HepG2 (cell line): ENCODE measurements at regions of chr9 and their contacts with region 1.

Region 1: DNA sequence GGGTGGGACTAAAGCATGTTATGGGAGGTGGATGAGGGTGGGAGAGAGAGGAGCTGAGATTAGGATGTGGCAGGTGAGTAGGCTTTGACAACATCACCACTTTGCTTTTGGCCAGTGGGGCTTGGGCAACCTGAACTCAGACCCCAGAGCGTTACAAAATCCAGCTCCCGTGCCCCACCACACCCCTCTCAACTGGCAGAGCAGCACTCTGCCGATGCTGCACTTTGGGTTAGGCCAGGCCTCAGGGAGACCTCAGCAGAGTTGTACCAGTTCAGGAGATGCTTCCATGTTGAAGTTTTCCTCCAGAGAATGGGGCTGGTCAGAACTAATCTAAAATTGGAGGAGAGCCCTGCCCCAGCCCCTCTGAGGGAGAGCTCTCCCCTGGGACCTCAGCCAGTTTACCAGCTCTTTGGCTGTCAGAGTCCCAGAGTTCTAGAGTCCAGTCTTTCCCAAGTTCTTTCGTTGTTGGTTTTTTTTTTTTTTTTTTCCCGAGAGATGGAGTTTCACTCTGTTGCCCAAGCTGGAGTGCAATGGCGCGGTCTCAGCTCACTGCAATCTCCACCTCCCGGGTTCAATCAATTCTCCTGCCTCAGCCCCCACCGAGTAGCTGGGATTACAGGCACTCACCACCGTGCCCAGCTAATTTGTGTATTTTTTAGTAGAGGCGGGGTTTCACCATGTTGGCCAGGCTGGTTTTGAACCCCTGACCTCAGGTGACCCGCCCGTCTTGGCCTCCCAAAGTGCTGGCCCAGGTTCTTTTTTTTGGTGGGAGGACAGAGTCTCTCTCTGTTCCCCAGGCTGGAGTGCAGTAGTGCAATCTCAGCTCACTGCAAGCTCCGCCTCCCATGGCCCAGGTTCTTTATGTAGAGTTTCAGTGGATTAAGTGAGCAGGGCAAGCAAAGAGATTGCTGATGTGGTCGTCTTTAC is 17.8 kb downstream of the NUDT2 start:
- DNase-seq: peak; percentile 61
- ATAC-seq: peak; percentile 73
- H3K4me3 ChIP-seq: peak overlapping the region; percentile 23 to 48 (median 34); a peak in 5 of 6 replicates
- H3K27ac ChIP-seq: peak overlapping the region; percentile 78
- H3K4me1 ChIP-seq: peaks cover 90% of the 10 kb centered on the region
- H3K27me3 ChIP-seq: no peaks in the 10 kb centered on the region
- CTCF ChIP-seq: no peak
- EP300 ChIP-seq: no peak
- POLR2A ChIP-seq: no peak
- RAD21 ChIP-seq: no peak

Region 2: DNA sequence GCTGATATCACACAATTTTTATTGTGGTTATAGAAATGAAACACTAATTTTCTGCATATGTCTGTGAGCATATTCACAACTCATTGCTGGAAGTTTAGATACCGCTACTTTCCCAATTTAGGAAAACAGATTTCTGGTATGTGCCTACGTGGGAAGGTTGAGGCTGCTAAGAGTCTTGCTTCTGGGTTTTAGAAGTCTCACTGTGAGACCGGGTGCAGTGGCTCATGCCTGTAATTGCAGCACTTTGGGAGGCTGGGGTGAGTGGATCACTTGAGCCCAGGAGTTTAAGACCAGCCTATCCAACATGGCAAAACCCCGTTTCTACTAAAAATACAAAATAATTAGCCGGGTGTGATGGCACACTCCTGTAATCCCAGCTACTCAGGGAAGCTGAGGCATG is 128.7 kb before region 1 on chr9:
- CTCF ChIA-PET with region 1: no interaction called
- POLR2A ChIA-PET with region 1: no interaction called
- in situ Hi-C with region 1: no loop called
- intact Hi-C with region 1: no loop called
- DNase-seq: no peak
- ATAC-seq: peak; percentile 59
- H3K4me3 ChIP-seq: no peak overlapping the region
- H3K27ac ChIP-seq: no peak overlapping the region
- H3K4me1 ChIP-seq: peaks cover 18% of the 10 kb centered on the region
- H3K27me3 ChIP-seq: no peaks in the 10 kb centered on the region
- CTCF ChIP-seq: no peak
- EP300 ChIP-seq: no peak
- POLR2A ChIP-seq: no peak
- RAD21 ChIP-seq: no peak

Region 3: DNA sequence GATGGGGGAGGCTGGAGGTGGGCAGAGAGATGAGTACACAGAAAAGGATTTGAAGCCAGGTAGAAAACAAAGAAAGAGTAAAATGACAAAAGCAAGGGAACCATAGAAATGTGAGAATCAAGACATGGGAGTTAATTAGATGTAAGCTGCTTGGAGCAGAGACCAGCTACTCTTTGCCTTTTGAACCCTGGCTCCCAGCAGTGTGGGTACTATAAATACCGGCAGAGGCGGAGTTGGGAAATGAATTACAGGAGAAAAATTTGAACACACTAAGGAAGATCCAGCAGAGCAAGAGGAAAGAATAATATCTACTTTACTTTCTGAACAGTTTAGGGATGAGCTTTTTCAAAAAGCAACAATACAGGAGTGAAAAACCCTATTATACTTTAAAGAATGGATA is 54.6 kb before region 1 on chr9:
- CTCF ChIA-PET with region 1: no interaction called
- POLR2A ChIA-PET with region 1: no interaction called
- in situ Hi-C with region 1: no loop called
- intact Hi-C with region 1: no loop called
- DNase-seq: no peak
- ATAC-seq: peak; percentile 62; the same call in 2 of the 3 replicates
- H3K4me3 ChIP-seq: no peak overlapping the region
- H3K27ac ChIP-seq: no peak overlapping the region
- H3K4me1 ChIP-seq: peaks cover 10% of the 10 kb centered on the region
- H3K27me3 ChIP-seq: no peaks in the 10 kb centered on the region
- CTCF ChIP-seq: no peak
- EP300 ChIP-seq: no peak
- POLR2A ChIP-seq: no peak
- RAD21 ChIP-seq: no peak

Region 4: GRCh38 chr9:34328987-34329832 is 17.9 kb before region 1 on chr9 and contains the starts of genes KIF24 and NUDT2:
- CTCF ChIA-PET with region 1: no interaction called
- POLR2A ChIA-PET with region 1: interaction called, 28 read pairs
- in situ Hi-C with region 1: no loop called
- intact Hi-C with region 1: loop called (anchors 1 kb)
- DNase-seq: peak; percentile 100
- ATAC-seq: peak; percentile 96
- H3K4me3 ChIP-seq: peak within 1 kb of the TSS; percentile 83 to 94 (median 89)
- H3K27ac ChIP-seq: peak within 1 kb of the TSS; percentile 89
- H3K4me1 ChIP-seq: peaks cover 50% of the 10 kb centered on the region
- H3K27me3 ChIP-seq: no peaks in the 10 kb centered on the region; a peak in 1 of 5 replicates
- CTCF ChIP-seq: 0 out of 2 replicates have a peak, but pooled peaks have one; percentile 11
- EP300 ChIP-seq: no peak
- POLR2A ChIP-seq: peak; percentile 88 to 94
- RAD21 ChIP-seq: no peak
- total RNA-seq, gene KIF24: 2.8 and 3.0 TPM in 2 replicates
- total RNA-seq, gene NUDT2: 19.9 and 28.0 TPM in 2 replicates

Region 5: GRCh38 chr9:34334337-34334824 is 12.8 kb before region 1 on chr9:
- CTCF ChIA-PET with region 1: no interaction called
- POLR2A ChIA-PET with region 1: interaction called, 28 read pairs
- in situ Hi-C with region 1: no loop called
- intact Hi-C with region 1: loop called (anchors 1 kb)
- DNase-seq: peak; percentile 89
- ATAC-seq: peak; percentile 63
- H3K4me3 ChIP-seq: peak overlapping the region in 1 of 3 experiments; percentile 49; a peak in 1 of 6 replicates
- H3K27ac ChIP-seq: peak overlapping the region; percentile 68
- H3K4me1 ChIP-seq: peaks cover 52% of the 10 kb centered on the region
- H3K27me3 ChIP-seq: no peaks in the 10 kb centered on the region; a peak in 1 of 5 replicates
- CTCF ChIP-seq: no peak
- EP300 ChIP-seq: peak in 1 of 2 experiments; percentile 76; a peak in 2 of 4 replicates
- POLR2A ChIP-seq: no peak
- RAD21 ChIP-seq: no peak